ENCODE measurements at regions of chr3 and their contacts with region 1.

Region 1: DNA sequence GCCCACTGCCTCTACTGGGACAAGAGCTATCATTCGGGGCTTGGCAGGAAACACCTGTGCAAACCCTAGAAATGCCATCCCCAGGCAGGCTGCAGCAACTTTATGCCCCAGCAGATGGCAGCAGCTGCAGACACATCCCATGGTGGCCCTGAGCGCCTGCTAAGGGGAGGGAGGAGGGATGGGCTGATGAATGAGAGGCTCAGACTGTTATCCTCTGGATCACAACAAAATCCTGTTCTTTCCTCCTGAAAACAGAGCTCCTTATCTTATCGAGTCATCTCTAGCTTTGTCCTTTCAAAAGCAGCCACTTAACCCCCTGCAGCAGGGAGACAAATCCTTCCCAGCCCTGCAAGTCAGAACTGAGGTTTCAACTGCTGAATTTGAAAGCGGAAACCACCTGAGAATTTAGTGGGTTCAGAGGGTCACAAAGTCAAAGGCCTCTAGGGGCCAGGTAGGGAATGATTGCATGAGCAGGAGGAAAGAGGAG is 90.6 kb upstream of the PROK2 start:
- DNase-seq: peak; percentile 90
- H3K4me3 Mint-ChIP-seq: no peak overlapping the region
- H3K27ac Mint-ChIP-seq: peak overlapping the region; percentile 71
- H3K4me1 Mint-ChIP-seq: peaks cover 37% of the 10 kb centered on the region
- H3K27me3 Mint-ChIP-seq: peaks cover 5% of the 10 kb centered on the region

Region 2: GRCh38 chr3:71710906-71711494 is 164.5 kb before region 1 on chr3:
- CTCF ChIA-PET with region 1: interaction called, 24 read pairs
- POLR2A ChIA-PET with region 1: no interaction called
- intact Hi-C with region 1: no loop called
- DNase-seq: no peak
- H3K4me3 Mint-ChIP-seq: no peak overlapping the region
- H3K27ac Mint-ChIP-seq: no peak overlapping the region
- H3K4me1 Mint-ChIP-seq: peaks cover 70% of the 10 kb centered on the region
- H3K27me3 Mint-ChIP-seq: no peaks in the 10 kb centered on the region

Region 3: DNA sequence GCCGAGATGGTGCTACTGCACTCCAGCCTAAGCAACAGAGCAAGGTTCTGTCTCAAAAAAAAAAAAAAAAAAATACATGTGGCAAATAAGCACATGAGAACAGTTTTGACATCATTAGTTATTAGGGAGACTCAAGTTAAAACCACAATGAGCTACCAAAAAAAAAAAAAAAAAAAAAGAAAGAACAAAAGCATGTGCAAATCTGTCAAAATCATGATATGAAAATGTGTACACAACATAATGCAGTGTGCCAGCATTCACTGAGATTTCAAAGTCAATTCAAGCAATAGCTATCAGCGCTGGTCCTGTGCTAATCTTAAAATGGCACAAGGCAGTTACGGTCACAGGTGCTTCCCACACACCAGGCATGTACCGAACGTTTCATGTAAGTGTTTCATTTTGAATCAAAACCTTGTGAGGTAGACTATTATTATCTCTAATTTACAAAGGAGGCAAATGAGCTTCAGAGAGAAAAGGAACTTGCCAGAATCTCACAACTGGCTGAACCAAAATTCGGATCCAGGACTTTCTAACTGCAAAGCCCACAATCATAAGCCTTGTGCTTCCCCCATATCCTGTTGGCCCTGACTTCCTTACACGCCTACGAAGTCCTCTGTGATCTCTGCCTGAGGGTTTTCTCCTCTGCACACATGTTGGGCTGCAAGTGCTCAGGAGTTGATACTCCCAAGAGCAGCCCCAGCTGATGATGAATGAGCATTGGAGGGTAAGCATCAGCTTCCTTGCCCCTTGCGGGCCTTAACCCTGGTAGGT is 109.5 kb after region 1 on chr3:
- CTCF ChIA-PET with region 1: interaction called, 4 read pairs
- POLR2A ChIA-PET with region 1: no interaction called
- intact Hi-C with region 1: loop called (anchors 10 kb)
- DNase-seq: peak; percentile 70
- H3K4me3 Mint-ChIP-seq: peak overlapping the region; percentile 13
- H3K27ac Mint-ChIP-seq: peak overlapping the region; percentile 83
- H3K4me1 Mint-ChIP-seq: peaks cover 42% of the 10 kb centered on the region
- H3K27me3 Mint-ChIP-seq: peaks cover 9% of the 10 kb centered on the region

Region 4: DNA sequence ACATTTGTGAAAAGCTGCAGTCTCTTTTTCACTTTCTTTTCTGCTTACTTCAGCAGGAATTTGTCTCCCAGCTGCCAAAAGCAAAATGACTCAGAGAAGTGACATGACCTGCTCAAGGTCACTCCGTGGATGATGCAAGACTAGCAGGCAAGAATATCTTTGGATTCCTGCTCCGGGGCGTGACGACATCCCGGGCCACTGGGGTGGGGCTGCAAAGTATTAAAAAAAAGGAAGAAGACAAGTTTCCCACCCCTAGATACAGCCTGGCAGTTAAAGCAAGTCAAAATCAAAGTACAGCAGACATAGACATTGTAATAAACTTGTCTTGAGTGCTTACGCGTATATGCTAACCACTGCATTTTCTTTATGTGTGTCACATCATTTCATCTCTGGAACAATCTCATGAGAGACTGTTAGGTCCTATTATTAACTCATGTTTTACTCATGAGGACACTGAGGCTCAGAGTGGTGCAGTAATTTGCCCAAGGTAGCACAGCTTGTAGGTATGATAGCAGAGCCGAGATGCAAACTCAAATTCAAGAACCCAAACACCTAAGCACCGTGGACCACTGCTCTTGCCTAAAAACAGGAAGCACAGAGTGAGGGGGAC is 394.7 kb after region 1 on chr3:
- CTCF ChIA-PET with region 1: no interaction called
- POLR2A ChIA-PET with region 1: no interaction called
- intact Hi-C with region 1: loop called (anchors 2 kb)
- DNase-seq: peak; percentile 47
- H3K4me3 Mint-ChIP-seq: no peak overlapping the region
- H3K27ac Mint-ChIP-seq: peak overlapping the region; percentile 64
- H3K4me1 Mint-ChIP-seq: peaks cover 55% of the 10 kb centered on the region
- H3K27me3 Mint-ChIP-seq: peaks cover 1% of the 10 kb centered on the region

Region 5: GRCh38 chr3:72482589-72483321 is 607.3 kb after region 1 on chr3:
- CTCF ChIA-PET with region 1: no interaction called
- POLR2A ChIA-PET with region 1: no interaction called
- intact Hi-C with region 1: loop called (anchors 10 kb)
- DNase-seq: peak; percentile 95
- H3K4me3 Mint-ChIP-seq: peak overlapping the region; percentile 42
- H3K27ac Mint-ChIP-seq: peak overlapping the region; percentile 91
- H3K4me1 Mint-ChIP-seq: peaks cover 79% of the 10 kb centered on the region
- H3K27me3 Mint-ChIP-seq: no peaks in the 10 kb centered on the region

Region 6: DNA sequence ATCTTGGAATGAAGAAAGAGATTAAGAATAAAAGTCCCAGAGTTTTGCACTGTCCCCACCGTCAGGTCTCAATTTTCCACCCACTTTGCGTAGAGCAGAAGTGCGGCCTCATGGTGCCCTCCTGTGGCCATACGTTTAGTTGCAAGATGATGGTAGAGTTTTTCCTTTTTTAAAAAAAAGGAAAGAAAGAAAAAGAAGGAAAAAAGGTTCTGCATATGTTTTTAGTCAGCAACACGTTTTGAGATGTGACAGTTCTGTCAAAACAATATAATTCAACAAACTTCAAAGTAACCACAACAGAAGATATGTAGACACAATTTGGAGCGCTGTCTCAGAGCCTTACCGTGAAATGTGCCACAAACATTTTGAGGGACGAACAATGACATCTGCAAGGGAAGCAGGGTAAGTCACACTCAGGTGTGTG is 1210.6 kb after region 1 on chr3:
- CTCF ChIA-PET with region 1: interaction called, 6 read pairs
- POLR2A ChIA-PET with region 1: no interaction called
- intact Hi-C with region 1: loop called (anchors 10 kb)
- DNase-seq: peak; percentile 62
- H3K4me3 Mint-ChIP-seq: no peak overlapping the region
- H3K27ac Mint-ChIP-seq: no peak overlapping the region
- H3K4me1 Mint-ChIP-seq: peaks cover 11% of the 10 kb centered on the region
- H3K27me3 Mint-ChIP-seq: no peaks in the 10 kb centered on the region